K562 (cell line): ENCODE measurements at regions of chr11 and their contacts with region 1.

Region 1: GRCh38 chr11:99015634-99016454 is 4.9 kb upstream of the CNTN5 start:
- DNase-seq: peak; percentile 43 to 51 (median 46)
- ATAC-seq: peak; percentile 53; the same call in 1 of the 3 replicates
- H3K4me3 ChIP-seq: no peak overlapping the region
- H3K27ac ChIP-seq: no peak overlapping the region
- H3K4me1 ChIP-seq: no peaks in the 10 kb centered on the region
- H3K27me3 ChIP-seq: no peaks in the 10 kb centered on the region
- CTCF ChIP-seq: peak; percentile 52 to 76 (median 66); a peak in 5 of 6 replicates
- EP300 ChIP-seq: no peak
- POLR2A ChIP-seq: no peak
- RAD21 ChIP-seq: peak; percentile 91 to 94

Region 2: GRCh38 chr11:97965849-97966646 is 1049.8 kb before region 1 on chr11:
- CTCF ChIA-PET with region 1: no interaction called
- POLR2A ChIA-PET with region 1: no interaction called
- in situ Hi-C with region 1: no loop called
- intact Hi-C with region 1: loop called (anchors 10 kb)
- DNase-seq: no peak
- ATAC-seq: no peak
- H3K4me3 ChIP-seq: no peak overlapping the region
- H3K27ac ChIP-seq: peak overlapping the region; percentile 98
- H3K4me1 ChIP-seq: peaks cover 10 to 38% of the 10 kb centered on the region in 2 experiments; a peak in 3 of 5 replicates
- H3K27me3 ChIP-seq: no peaks in the 10 kb centered on the region
- CTCF ChIP-seq: no peak
- EP300 ChIP-seq: no peak
- POLR2A ChIP-seq: no peak
- RAD21 ChIP-seq: no peak

Region 3: GRCh38 chr11:98090861-98091505 is 924.9 kb before region 1 on chr11:
- CTCF ChIA-PET with region 1: no interaction called
- POLR2A ChIA-PET with region 1: no interaction called
- in situ Hi-C with region 1: no loop called
- intact Hi-C with region 1: loop called (anchors 10 kb)
- DNase-seq: no peak
- ATAC-seq: 0 out of 3 replicates have a peak, but pooled peaks have one; percentile 35
- H3K4me3 ChIP-seq: no peak overlapping the region
- H3K27ac ChIP-seq: no peak overlapping the region
- H3K4me1 ChIP-seq: no peaks in the 10 kb centered on the region
- H3K27me3 ChIP-seq: no peaks in the 10 kb centered on the region
- CTCF ChIP-seq: no peak
- EP300 ChIP-seq: no peak
- POLR2A ChIP-seq: no peak
- RAD21 ChIP-seq: no peak

Region 4: DNA sequence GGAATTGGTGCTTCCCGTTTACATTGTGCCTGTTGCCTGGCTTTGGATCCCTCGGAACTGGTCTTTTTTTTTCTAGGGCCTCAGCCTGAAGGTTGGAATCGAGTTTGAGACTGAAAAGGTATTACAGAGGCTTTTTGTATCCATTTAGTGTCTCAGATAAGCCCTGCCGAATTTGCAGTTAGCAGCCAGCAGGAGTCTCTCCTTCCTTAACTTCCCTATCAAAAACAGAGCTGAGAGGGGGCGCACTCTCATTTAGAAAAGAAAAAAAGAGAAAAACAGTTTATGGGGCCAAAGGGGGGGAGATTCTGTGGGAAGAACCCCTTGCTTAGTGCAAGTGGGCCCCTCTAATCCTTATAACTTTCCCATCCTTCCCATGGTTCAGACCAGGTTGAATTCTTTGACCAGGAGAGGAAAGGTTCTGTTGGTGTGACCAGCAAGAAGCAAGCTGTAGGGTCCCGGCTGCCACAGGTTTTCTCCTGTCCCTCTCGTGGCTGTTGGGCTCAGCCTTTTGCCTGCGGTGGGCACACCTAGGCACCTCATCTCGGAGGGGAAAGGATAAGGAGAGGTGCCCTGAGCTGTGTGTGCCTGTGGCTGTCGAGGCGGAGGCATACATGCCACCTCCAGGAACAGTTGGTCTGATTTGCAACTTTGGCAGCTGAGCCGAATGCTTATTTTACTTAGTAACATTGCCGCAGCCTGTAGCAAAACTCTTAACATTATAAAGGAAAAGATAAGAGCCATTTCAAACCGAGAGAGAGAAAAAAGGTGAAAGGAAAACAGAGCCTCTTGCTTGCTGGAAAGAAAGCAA is 560.1 kb before region 1 on chr11:
- CTCF ChIA-PET with region 1: interaction called, 4 read pairs
- POLR2A ChIA-PET with region 1: no interaction called
- in situ Hi-C with region 1: no loop called
- intact Hi-C with region 1: loop called (anchors 5 kb)
- DNase-seq: peak; percentile 8 to 26 (median 16)
- ATAC-seq: peak; percentile 79
- H3K4me3 ChIP-seq: no peak overlapping the region
- H3K27ac ChIP-seq: no peak overlapping the region
- H3K4me1 ChIP-seq: no peaks in the 10 kb centered on the region
- H3K27me3 ChIP-seq: no peaks in the 10 kb centered on the region
- CTCF ChIP-seq: peak; percentile 48 to 97 (median 67); a peak in 4 of 6 replicates
- EP300 ChIP-seq: no peak
- POLR2A ChIP-seq: no peak
- RAD21 ChIP-seq: peak; percentile 17 to 69; a peak in 2 of 4 replicates